Activated T-helper 1 cell treated with anti-CD3 and anti-CD28 coated beads, Interleukin-12 subunit alpha, Interleukin-12 subunit beta, Interleukin-2, Interleukin-4 antibody, amounts not matched to agents 30 ng/mL and 10 ng/mL and 1 ng/mL, durations not matched to agents 14 hours and 24 hours and 36 hours (primary cell): ENCODE measurements at regions of chr3 and their contacts with region 1.

Region 1: DNA sequence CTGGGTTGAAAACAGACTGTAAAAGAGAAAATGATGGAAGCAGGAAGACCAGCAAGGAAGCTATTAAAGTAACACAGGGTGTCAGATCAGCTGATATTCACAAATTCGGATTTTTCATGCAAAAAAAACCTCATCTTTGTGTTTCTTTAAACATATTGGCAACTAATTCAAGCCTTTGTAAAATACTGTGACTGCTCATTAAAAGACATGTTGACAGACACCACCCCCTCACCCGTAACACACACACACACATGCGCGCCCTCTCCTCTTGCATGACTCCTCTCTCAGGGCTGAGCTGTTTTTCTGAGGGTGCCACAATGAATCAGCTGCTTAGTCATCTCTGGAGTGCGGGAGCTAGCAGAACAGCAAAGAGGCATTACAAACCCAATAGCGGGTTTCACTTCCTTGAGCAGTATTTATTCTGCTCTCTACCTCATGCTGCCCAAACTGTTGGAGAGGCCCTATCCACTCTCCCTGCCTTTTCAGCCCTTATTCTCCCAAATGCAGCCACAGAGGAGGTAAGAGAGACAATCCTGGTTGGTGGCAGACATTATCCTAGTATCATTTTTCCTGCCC is 35.8 kb upstream of the CCDC80 start:
- DNase-seq: peak; percentile 89
- H3K4me3 Mint-ChIP-seq: peak overlapping the region; percentile 64
- H3K27ac Mint-ChIP-seq: peak overlapping the region; percentile 87
- H3K4me1 Mint-ChIP-seq: peaks cover 70% of the 10 kb centered on the region
- H3K27me3 Mint-ChIP-seq: no peaks in the 10 kb centered on the region

Region 2: DNA sequence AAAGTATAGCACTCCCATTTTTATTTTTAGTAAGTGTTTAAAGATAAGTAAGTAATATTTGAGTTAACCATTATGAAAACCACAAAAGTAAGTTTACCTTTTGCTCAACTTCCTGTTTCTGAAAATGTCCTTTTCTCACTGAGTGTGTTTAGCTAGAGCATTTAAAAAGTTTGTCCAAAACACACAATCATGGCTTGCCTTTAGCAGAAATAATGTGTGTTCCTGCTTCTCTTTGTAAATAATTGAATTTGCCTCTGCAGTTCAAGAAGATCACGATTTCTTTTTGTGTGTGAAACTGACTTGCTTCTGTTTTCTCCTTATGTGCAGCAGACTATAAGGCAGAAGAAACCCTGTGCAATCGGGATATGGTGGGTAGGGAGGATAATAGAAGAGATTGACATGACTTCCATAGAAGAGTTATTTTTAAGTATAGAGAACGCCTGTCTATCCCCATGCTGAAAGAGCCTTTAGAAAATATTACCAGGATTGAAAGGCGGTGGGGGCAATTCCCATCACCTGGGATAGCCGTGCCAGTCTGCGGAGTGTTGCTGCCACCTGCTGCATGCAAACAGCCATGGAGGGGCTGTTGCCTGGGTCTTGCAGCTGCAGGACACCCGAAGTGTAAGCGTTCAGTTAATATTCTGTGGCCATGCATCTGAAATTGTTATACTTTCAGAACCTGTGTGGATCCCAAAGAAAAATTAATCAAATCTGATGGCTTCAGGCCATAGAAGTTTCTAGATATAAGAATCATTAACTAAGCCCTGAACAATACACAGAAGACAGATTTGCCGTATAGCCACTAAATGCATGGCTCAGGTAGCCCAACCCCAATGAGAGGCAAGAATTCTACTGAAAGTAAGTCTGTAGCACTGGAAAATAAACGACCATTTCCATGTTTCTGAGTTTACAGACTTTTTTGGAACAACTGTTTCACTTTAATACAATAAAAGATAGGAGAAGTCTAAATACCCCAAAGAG is 1137.1 kb before region 1 on chr3:
- intact Hi-C with region 1: loop called (anchors 10 kb)
- DNase-seq: peak; percentile 36
- H3K4me3 Mint-ChIP-seq: peak overlapping the region; percentile 77
- H3K27ac Mint-ChIP-seq: peak overlapping the region; percentile 80
- H3K4me1 Mint-ChIP-seq: peaks cover 75% of the 10 kb centered on the region
- H3K27me3 Mint-ChIP-seq: no peaks in the 10 kb centered on the region

Region 3: DNA sequence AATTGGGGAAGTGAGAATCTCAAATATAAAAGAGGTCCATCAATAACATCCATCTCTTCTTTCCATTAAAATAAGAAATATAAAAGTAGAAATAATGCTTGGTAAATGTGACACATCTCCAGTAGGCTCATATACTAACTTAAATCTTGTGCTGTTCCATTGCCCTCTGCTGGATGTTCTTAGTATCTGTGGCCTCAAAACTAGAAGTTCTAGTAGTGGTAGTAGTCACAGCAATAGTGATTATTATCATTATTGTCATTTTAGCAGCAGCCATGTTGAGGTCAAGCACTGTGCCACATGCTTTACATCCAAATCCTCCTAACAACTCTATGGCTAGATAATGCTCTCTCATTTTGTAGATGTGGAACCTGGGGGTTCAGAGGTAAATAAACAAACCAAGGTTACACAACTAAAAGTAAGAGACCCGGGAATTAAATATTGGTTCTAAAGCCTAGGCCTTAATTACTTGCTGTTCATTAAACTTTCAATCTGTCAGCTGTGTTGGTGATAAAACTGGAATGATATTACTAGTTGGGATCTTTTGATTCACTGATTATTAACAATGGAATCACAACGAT is 157.2 kb before region 1 on chr3:
- intact Hi-C with region 1: loop called (anchors 5 kb)
- DNase-seq: no peak
- H3K4me3 Mint-ChIP-seq: no peak overlapping the region
- H3K27ac Mint-ChIP-seq: peak overlapping the region; percentile 4
- H3K4me1 Mint-ChIP-seq: peaks cover 35% of the 10 kb centered on the region
- H3K27me3 Mint-ChIP-seq: no peaks in the 10 kb centered on the region

Region 4: GRCh38 chr3:112587336-112587735 is 89.4 kb before region 1 on chr3:
- intact Hi-C with region 1: no loop called
- DNase-seq: no peak
- H3K4me3 Mint-ChIP-seq: no peak overlapping the region
- H3K27ac Mint-ChIP-seq: no peak overlapping the region
- H3K4me1 Mint-ChIP-seq: peaks cover 10% of the 10 kb centered on the region
- H3K27me3 Mint-ChIP-seq: no peaks in the 10 kb centered on the region

Region 5: GRCh38 chr3:112858410-112859069 is 181.8 kb after region 1 on chr3:
- intact Hi-C with region 1: loop called (anchors 2 kb)
- DNase-seq: no peak
- H3K4me3 Mint-ChIP-seq: peak overlapping the region; percentile 13
- H3K27ac Mint-ChIP-seq: peak overlapping the region; percentile 71
- H3K4me1 Mint-ChIP-seq: peaks cover 35% of the 10 kb centered on the region
- H3K27me3 Mint-ChIP-seq: no peaks in the 10 kb centered on the region

Region 6: DNA sequence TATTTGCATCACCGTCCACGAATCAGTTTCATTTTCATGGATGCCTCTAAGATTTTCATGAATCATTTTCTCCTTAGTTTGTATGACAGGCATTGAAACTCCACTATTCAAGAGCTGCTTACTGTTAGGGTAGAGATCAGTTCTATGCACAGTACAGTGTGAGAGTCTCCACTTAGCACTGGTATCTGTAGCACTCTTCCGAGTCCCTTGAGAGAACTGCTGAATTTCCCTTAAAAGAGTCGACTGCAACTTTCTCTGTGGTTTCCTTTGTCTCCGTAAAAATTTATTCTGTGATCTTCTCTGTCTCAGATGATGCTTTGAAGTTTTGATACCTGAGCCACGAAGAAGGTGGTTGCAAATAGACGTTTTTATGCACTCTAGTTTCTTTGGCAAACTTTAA is 328.9 kb after region 1 on chr3:
- intact Hi-C with region 1: loop called (anchors 1 kb)
- DNase-seq: peak; percentile 24
- H3K4me3 Mint-ChIP-seq: peak overlapping the region; percentile 67
- H3K27ac Mint-ChIP-seq: peak overlapping the region; percentile 91
- H3K4me1 Mint-ChIP-seq: peaks cover 83% of the 10 kb centered on the region
- H3K27me3 Mint-ChIP-seq: no peaks in the 10 kb centered on the region

Region 7: DNA sequence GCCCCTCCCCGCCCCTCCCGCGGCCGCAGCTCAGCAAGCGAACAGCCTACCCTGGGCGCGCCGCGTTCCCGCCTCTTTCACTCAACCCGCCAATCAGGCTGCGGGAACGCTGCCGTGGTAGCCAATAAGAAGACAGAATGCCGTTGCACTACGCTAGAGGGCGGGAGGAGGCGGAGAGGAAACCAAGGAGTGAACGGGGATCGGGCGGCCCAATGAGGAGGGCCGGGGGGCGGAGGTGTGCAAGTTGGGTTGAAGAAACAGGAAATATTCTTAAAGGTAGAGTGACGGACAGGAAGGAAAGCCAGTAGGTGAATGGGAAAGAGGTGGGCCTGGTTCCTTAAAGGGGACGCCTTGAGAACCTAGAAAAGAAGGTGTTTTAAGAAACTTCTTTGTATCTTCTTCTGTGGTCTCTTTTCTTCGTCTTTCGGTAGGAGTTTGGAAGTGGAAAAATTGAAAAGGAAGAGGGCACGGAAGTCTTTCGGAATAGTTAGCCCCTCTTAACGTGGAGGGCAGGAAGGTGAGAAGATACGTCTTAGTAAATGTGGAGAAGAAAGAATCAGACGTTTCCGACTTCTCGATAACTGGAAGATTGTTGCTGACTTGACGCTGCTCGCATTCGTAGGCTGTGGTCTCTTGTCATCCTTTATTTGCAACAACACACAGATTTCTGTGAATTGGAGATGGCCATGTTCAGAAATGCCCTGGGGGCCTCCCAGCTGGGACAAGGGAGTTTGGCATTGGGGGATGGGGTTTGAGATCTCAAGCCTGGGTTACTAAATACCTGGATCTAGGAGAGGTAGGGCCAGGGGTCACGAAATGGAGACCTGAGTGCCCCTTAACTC is 1020.1 kb after region 1 on chr3:
- intact Hi-C with region 1: loop called (anchors 2 kb)
- DNase-seq: peak; percentile 99
- H3K4me3 Mint-ChIP-seq: no peak overlapping the region
- H3K27ac Mint-ChIP-seq: no peak overlapping the region
- H3K4me1 Mint-ChIP-seq: peaks cover 20% of the 10 kb centered on the region
- H3K27me3 Mint-ChIP-seq: no peaks in the 10 kb centered on the region